Mammary epithelial cell (primary cell): ENCODE measurements at regions of chr15 and their contacts with region 1.

Region 1: DNA sequence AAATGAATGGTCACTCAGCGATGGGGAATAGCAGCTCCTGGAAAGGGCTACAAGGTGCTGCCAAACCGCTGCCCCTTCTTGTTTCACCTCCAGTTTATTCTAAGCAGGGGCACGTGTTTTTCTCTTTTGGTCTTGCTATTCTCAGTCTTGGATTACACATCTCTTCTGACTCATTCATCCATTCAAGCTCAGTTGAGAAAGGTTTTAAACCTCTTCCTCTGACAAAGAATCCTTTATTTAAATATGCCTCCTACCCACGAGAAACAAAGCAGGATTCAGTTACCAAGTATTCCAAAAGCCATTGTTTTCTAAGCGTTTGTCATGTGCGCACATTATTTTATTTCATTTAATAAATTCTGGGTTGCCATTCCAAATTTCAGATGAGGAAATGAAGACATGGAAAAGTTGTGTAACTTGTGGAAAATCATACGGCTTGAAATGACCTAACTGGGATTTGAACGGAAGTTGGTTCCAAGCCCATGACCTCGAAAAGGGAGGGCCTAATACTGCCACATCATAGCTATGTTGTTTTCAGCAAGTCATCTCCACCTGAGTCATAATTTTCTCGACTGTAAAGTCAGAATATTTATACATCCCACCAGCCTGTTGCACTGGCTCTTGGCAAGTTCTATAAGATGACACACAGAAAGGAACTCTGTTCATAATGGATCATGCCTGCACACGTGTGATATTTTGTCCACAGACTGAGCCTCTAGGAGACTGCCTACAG is 292.0 kb upstream of the SLCO3A1 start:
- DNase-seq: peak; percentile 98
- H3K4me3 ChIP-seq: peak overlapping the region; percentile 14 to 26 (median 17)
- H3K27ac ChIP-seq: peak overlapping the region; percentile 97
- H3K4me1 ChIP-seq: peaks cover 20% of the 10 kb centered on the region
- H3K27me3 ChIP-seq: no peaks in the 10 kb centered on the region
- CTCF ChIP-seq: no peak

Region 2: DNA sequence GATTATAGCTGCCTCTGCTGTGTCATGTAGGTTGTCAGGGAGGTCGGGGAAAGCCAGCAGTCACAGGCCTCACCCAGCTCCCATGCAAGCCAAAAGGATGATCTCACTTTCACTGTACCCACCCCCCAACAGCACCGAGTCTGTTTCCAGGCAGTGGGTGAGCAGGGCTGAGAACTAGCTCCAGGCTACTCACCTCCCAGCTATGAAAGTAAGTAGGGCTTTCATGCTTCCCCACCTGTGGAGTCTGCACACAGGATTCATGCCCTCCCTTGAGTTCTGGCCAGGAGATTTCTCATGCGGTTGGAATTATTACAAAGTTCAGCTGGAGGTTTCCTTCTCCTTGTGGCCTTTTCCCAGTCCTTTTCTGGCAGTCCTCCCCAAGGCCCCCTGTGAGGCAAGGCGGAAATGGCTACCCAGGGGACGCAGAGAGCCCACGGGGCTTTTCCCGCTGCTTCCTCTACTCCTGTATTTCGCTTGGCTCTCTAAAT is 105.2 kb before region 1 on chr15:
- CTCF ChIA-PET with region 1: no interaction called
- dilution Hi-C with region 1: no loop called
- in situ Hi-C with region 1: no loop called
- intact Hi-C with region 1: loop called (anchors 2 kb)
- DNase-seq: peak; percentile 100
- H3K4me3 ChIP-seq: no peak overlapping the region
- H3K27ac ChIP-seq: peak overlapping the region; percentile 92
- H3K4me1 ChIP-seq: peaks cover 18% of the 10 kb centered on the region
- H3K27me3 ChIP-seq: no peaks in the 10 kb centered on the region
- CTCF ChIP-seq: no peak

Region 3: GRCh38 chr15:91515188-91515754 is 46.3 kb before region 1 on chr15:
- CTCF ChIA-PET with region 1: interaction called, 14 read pairs
- dilution Hi-C with region 1: no loop called
- in situ Hi-C with region 1: no loop called
- intact Hi-C with region 1: no loop called
- DNase-seq: peak; percentile 90
- H3K4me3 ChIP-seq: no peak overlapping the region
- H3K27ac ChIP-seq: no peak overlapping the region
- H3K4me1 ChIP-seq: no peaks in the 10 kb centered on the region
- H3K27me3 ChIP-seq: no peaks in the 10 kb centered on the region
- CTCF ChIP-seq: no peak

Region 4: DNA sequence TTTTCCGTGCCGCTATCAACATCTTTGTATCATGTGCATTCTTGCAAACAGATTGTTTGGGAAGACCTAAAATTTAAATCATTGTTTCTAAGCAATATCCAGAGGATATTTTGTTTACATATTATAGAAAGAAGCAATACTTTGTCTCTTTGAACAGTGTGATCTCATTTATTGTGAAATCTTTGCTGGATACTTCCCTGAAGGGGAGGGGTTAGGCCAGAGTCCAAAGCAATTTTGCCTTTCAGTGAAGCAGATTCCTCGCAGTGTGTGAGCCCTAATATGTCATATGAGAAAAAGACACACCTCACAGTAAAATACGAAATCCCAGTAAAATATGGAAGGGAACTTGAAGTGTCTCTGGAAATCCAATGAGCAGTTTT is 133.3 kb after region 1 on chr15:
- CTCF ChIA-PET with region 1: no interaction called
- dilution Hi-C with region 1: no loop called
- in situ Hi-C with region 1: no loop called
- intact Hi-C with region 1: loop called (anchors 5 kb)
- DNase-seq: peak; percentile 61
- H3K4me3 ChIP-seq: peak overlapping the region; percentile 9 to 30 (median 25)
- H3K27ac ChIP-seq: peak overlapping the region; percentile 36
- H3K4me1 ChIP-seq: peaks cover 9% of the 10 kb centered on the region
- H3K27me3 ChIP-seq: no peaks in the 10 kb centered on the region
- CTCF ChIP-seq: no peak

Region 5: GRCh38 chr15:91953432-91953831 is 391.9 kb after region 1 on chr15:
- CTCF ChIA-PET with region 1: no interaction called
- dilution Hi-C with region 1: no loop called
- in situ Hi-C with region 1: no loop called
- intact Hi-C with region 1: loop called (anchors 1 kb)
- DNase-seq: peak; percentile 99
- H3K4me3 ChIP-seq: no peak overlapping the region
- H3K27ac ChIP-seq: peak overlapping the region; percentile 77
- H3K4me1 ChIP-seq: peaks cover 73% of the 10 kb centered on the region
- H3K27me3 ChIP-seq: no peaks in the 10 kb centered on the region
- CTCF ChIP-seq: peak in 1 of 2 donors; percentile 9